Activated CD4-positive, alpha-beta T cell treated with anti-CD3 and anti-CD28 coated beads, Interleukin-2, amount 10 ng/mL, durations not matched to agents 7 days and 5 days (primary cell): ENCODE measurements at regions of chr18 and their contacts with region 1.

Region 1: GRCh38 chr18:2589345-2590068 is 18.1 kb downstream of the NDC80 start:
- DNase-seq: no peak
- H3K4me3 Mint-ChIP-seq: peak overlapping the region; percentile 28
- H3K27ac Mint-ChIP-seq: peak overlapping the region; percentile 88
- H3K4me1 Mint-ChIP-seq: peaks cover 58% of the 10 kb centered on the region
- H3K27me3 Mint-ChIP-seq: no peaks in the 10 kb centered on the region

Region 2: DNA sequence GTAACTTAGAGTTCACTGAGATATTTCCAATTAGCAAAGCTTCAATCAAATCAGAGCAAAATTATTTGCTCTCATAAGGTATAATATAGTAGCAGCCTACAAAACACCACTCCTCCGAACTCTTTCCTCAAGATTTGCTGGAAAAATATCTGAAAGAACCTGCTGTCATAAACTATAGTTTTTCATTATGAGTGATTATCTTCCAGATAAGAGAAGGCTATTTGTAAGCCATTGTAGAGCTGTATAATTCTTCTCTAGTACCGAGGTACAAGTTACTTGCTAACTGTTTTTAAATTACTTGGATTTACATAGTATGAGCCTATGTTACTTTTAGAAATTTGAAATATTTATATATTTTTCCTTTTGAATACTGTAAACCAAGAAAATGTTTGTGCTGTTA is 16.1 kb before region 1 on chr18:
- CTCF ChIA-PET with region 1: interaction called, 19 read pairs
- POLR2A ChIA-PET with region 1: no interaction called
- DNase-seq: no peak
- H3K4me3 Mint-ChIP-seq: peak overlapping the region; percentile 96
- H3K27ac Mint-ChIP-seq: peak overlapping the region; percentile 99
- H3K4me1 Mint-ChIP-seq: peaks cover 67% of the 10 kb centered on the region
- H3K27me3 Mint-ChIP-seq: no peaks in the 10 kb centered on the region